Mammary epithelial cell (primary cell): ENCODE measurements at regions of chr1 and their contacts with region 1.

Region 1: GRCh38 chr1:156677616-156678596 is 699 bp upstream of the NES start:
- DNase-seq: peak; percentile 67
- H3K4me3 ChIP-seq: no peak overlapping the region
- H3K27ac ChIP-seq: no peak overlapping the region
- H3K4me1 ChIP-seq: peaks cover 4% of the 10 kb centered on the region
- H3K27me3 ChIP-seq: peaks cover 19% of the 10 kb centered on the region
- CTCF ChIP-seq: peak; percentile 91 to 94

Region 2: GRCh38 chr1:156625436-156626078 is 52.3 kb before region 1 on chr1:
- CTCF ChIA-PET with region 1: no interaction called
- dilution Hi-C with region 1: no loop called
- in situ Hi-C with region 1: no loop called
- intact Hi-C with region 1: loop called (anchors 1 kb)
- DNase-seq: no peak
- H3K4me3 ChIP-seq: no peak overlapping the region
- H3K27ac ChIP-seq: no peak overlapping the region
- H3K4me1 ChIP-seq: peaks cover 20% of the 10 kb centered on the region
- H3K27me3 ChIP-seq: peaks cover 19% of the 10 kb centered on the region
- CTCF ChIP-seq: peak; percentile 58 to 75

Region 3: DNA sequence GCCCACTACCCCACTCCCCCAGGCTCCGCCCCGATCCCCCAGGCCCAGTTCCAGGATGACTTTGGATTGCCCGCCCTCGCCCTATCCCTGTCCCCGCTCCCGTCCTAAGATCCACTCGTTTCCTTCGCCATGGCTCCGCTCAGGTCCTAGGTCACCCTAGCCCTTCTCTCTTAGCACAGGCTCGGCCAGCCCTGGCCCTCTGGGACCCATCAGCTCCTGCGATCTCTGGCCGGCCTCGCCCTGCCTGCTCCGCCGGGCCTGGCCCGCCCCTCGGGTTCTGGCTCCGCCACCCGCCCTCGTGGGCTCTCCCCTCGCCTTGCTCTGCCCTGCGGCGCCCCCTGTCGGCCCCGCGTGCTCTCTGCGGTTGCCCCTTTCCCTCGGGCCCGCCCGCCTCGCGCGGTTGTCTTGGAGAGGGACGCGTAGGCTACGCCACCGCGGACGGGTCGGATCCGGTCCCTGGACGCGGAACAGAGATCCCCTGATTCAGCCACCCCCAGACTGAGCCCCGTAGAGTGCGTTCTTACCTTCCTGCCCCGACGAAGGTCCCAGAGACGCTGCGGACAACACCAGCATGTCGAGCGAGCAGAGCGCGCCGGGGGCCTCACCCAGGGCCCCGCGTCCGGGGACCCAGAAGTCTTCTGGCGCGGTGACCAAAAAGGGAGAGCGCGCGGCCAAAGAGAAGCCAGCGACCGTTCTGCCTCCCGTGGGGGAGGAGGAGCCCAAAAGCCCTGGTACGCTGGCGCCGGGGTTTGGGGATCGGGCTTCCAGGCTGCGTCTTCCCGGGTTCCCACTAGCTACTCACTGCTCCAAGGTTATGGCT is 242.5 kb after region 1 on chr1 and contains the start of gene LRRC71:
- CTCF ChIA-PET with region 1: no interaction called
- dilution Hi-C with region 1: no loop called
- in situ Hi-C with region 1: no loop called
- intact Hi-C with region 1: no loop called
- DNase-seq: peak; percentile 48
- H3K4me3 ChIP-seq: peak within 1 kb of the TSS in 2 of 3 experiments; percentile 34 to 44
- H3K27ac ChIP-seq: no peak within 1 kb of the TSS
- H3K4me1 ChIP-seq: peaks cover 7% of the 10 kb centered on the region
- H3K27me3 ChIP-seq: peaks cover 45% of the 10 kb centered on the region
- CTCF ChIP-seq: peak; percentile 71 to 88
- total RNA-seq, gene LRRC71: not detected